ENCODE measurements at regions of chr20 and their contacts with region 1.

Region 1: GRCh38 chr20:11912013-11912658 is 5.6 kb upstream of the BTBD3 start:
- DNase-seq: peak in 1 of 10 donors; percentile 37
- H3K4me3 ChIP-seq: no peak overlapping the region
- H3K27ac ChIP-seq: peak overlapping the region in 25 of 59 donors; percentile 1 to 57 (median 32)
- H3K27me3 ChIP-seq: no peaks in the 10 kb centered on the region
- CTCF ChIP-seq: peak in 54 of 56 donors; percentile 24 to 71 (median 54)

Region 2: GRCh38 chr20:12229891-12230290 is 317.8 kb after region 1 on chr20:
- intact Hi-C with region 1: loop called (anchors 5 kb)
- DNase-seq: no peak
- H3K4me3 ChIP-seq: no peak overlapping the region
- H3K27ac ChIP-seq: no peak overlapping the region
- H3K27me3 ChIP-seq: no peaks in the 10 kb centered on the region
- CTCF ChIP-seq: no peak